HEK293 (cell line): ENCODE measurements at regions of chr6 and their contacts with region 1.

Region 1: GRCh38 chr6:99868074-99868702 is 125.8 kb downstream of the MCHR2 start:
- H3K4me3 ChIP-seq: no peak overlapping the region
- H3K27ac ChIP-seq: no peak overlapping the region
- H3K4me1 ChIP-seq: no peaks in the 10 kb centered on the region
- CTCF ChIP-seq: peak; percentile 77

Region 2: GRCh38 chr6:99490608-99491007 is 377.6 kb before region 1 on chr6:
- CTCF ChIA-PET with region 1: no interaction called
- POLR2A ChIA-PET with region 1: no interaction called
- H3K4me3 ChIP-seq: no peak overlapping the region
- H3K27ac ChIP-seq: no peak overlapping the region
- H3K4me1 ChIP-seq: peaks cover 14% of the 10 kb centered on the region
- CTCF ChIP-seq: no peak

Region 3: DNA sequence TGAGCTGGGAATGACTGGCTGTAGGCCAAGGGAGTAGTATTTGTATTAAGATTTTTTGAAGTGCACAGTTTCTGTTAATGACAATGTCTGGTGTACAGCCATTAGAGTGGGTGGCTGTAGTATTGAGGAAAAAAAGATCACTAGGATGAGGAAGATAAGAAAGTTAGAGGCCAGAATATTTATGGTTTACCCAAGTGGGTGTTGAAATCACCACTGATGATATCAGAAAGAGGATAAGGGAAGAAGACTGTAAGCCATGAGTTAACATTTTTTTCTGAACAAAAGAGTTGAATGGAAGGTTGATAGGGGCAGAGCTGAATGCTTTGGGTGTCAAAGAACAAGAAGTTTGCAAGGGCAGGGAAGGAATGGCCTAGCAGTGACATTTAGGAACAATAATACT is 156.9 kb before region 1 on chr6:
- CTCF ChIA-PET with region 1: no interaction called
- POLR2A ChIA-PET with region 1: no interaction called
- H3K4me3 ChIP-seq: no peak overlapping the region
- H3K27ac ChIP-seq: no peak overlapping the region
- H3K4me1 ChIP-seq: no peaks in the 10 kb centered on the region
- CTCF ChIP-seq: no peak

Region 4: DNA sequence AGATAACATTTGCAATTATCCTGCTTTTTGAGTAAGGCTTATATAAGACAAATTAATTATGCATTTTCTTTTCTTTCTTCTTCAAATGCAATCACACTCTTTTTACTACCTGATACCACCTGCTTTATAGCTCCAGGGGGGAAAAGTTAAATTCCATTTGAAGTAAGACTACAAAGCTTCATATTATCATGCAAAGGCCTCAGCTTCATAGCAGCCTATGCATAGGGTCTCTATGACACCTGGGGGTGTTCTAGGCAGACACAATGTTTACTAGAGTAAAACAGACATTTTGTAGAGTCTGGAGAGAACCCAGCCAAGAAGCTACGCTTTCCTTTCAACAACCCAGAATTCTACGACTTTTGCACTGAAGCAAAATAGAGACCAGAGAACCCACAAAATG is 22.2 kb before region 1 on chr6:
- CTCF ChIA-PET with region 1: interaction called, 12 read pairs
- POLR2A ChIA-PET with region 1: no interaction called
- H3K4me3 ChIP-seq: no peak overlapping the region
- H3K27ac ChIP-seq: no peak overlapping the region
- H3K4me1 ChIP-seq: no peaks in the 10 kb centered on the region
- CTCF ChIP-seq: no peak

Region 5: DNA sequence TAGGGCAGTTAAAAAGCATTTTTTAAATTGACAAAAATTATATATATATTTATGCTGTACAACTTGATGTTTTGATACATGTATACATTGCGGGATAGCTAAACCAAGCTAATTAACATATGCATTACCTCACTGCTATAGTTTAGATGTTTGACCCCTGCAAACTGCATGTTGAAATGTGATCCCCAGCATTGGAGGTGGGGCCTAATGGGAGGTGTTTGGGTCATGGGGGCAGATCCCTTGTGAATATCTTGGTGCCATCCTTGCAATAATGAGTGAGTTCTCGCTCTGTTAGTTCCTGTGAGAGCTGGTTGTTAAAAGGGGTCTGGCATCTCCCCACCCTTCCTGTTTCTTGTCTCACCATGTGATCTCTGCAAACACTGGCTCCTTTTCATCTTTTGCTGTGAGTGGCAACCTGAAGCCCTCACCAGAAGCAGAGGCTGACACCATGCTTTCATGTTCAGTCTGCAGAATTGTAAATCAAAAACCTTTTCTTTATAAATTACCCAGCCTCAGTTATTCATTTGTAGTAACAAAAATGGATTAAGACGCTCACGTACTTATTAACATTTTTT is 14.0 kb after region 1 on chr6:
- CTCF ChIA-PET with region 1: interaction called, 37 read pairs
- POLR2A ChIA-PET with region 1: no interaction called
- H3K4me3 ChIP-seq: no peak overlapping the region
- H3K27ac ChIP-seq: no peak overlapping the region
- H3K4me1 ChIP-seq: no peaks in the 10 kb centered on the region
- CTCF ChIP-seq: no peak

Region 6: GRCh38 chr6:99912657-99913056 is 44.5 kb after region 1 on chr6:
- CTCF ChIA-PET with region 1: interaction called, 19 read pairs
- POLR2A ChIA-PET with region 1: no interaction called
- H3K4me3 ChIP-seq: no peak overlapping the region
- H3K27ac ChIP-seq: no peak overlapping the region
- H3K4me1 ChIP-seq: no peaks in the 10 kb centered on the region
- CTCF ChIP-seq: no peak

Region 7: DNA sequence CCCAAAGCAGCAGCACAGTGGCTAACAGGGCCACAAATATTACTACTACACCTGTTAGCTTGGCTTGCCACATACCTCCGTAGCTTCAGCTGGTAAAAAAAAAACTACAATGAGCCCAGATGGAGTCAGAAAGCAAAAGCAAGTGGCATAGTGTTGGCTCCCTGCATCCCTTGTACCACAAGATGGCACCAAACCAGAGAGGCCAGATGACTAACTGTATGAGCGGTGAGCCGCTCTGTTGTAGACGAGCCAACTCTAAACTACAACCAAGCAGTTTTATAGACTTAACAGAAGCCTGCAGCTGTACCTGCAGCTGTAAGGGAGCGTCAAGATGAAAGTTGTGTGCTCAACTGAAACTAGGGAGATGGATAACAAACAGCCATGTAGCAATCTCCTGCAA is 210.3 kb after region 1 on chr6:
- CTCF ChIA-PET with region 1: interaction called, 13 read pairs
- POLR2A ChIA-PET with region 1: no interaction called
- H3K4me3 ChIP-seq: no peak overlapping the region
- H3K27ac ChIP-seq: no peak overlapping the region
- H3K4me1 ChIP-seq: no peaks in the 10 kb centered on the region
- CTCF ChIP-seq: peak; percentile 44

Region 8: DNA sequence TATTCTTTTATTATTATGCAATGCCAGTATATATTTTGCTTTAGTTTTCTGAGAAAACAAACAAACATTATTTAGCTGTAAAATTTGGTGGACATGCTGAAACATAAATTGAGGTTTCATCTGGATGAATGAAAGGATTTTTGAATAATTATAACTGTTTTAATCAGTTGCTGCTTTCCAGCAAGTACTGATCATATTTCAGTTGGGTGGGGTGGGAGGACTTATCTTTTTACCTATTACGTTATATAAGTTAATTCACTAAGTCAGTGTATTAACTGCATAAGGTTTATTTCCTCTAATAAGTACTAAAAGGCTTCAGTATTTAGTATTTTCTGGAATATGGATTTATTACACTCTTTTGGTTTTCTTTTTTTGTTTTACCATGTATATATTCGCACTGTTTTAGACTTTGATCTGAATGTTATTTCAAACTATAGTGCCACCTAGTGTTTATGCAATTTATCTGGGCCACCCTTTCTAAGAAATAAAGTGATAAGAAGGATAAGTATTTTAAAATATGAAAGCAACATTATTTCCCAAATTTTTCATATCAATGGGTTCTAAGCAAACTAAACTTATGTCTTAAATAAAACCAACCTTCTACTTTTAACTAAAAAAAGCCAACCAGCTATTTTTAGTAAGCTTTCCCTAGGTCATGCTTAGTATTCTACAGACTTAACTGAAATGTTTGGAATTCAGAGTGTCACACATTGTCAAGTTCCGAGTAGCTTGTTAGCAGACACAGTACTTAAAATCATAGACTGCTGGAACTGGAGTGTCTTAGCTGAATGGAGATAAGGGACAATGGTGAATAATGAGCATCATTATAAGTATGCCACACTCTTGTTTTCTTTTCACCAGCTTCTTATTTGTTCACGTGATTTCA is 231.2 kb after region 1 on chr6:
- CTCF ChIA-PET with region 1: interaction called, 142 read pairs
- POLR2A ChIA-PET with region 1: no interaction called
- H3K4me3 ChIP-seq: no peak overlapping the region
- H3K27ac ChIP-seq: no peak overlapping the region
- H3K4me1 ChIP-seq: no peaks in the 10 kb centered on the region
- CTCF ChIP-seq: no peak

Region 9: GRCh38 chr6:100116411-100117194 is 248.4 kb after region 1 on chr6:
- CTCF ChIA-PET with region 1: interaction called, 16 read pairs
- POLR2A ChIA-PET with region 1: no interaction called
- H3K4me3 ChIP-seq: no peak overlapping the region
- H3K27ac ChIP-seq: no peak overlapping the region
- H3K4me1 ChIP-seq: no peaks in the 10 kb centered on the region
- CTCF ChIP-seq: no peak; the same call in 1 of the 2 replicates